Calu3 (cell line): ENCODE measurements at regions of chr22 and their contacts with region 1.

Region 1: GRCh38 chr22:26236991-26237390 is 67.7 kb downstream of the SEZ6L start:
- DNase-seq: no peak
- H3K4me3 Mint-ChIP-seq: no peak overlapping the region
- H3K27ac Mint-ChIP-seq: no peak overlapping the region
- H3K4me1 Mint-ChIP-seq: no peaks in the 10 kb centered on the region
- H3K27me3 Mint-ChIP-seq: peaks cover 91% of the 10 kb centered on the region
- CTCF ChIP-seq: no peak

Region 2: DNA sequence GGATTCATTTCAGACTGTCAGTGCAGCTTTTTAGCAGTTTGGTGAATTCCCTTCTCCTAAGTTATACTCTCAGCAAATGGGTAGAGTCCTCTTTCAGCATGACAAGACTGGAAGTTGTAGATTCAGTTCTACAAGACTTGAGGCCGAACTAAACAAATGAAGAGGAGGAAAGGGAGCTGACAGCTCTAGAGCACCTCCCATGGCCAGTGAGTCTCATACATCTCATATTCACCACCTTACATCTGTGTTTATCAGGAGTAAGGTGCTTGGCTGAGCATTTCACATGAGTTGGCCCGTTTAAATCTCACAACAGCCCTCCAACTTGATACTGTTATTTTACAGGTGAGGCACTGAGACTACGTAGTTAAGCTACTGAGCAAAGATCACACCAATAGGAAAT is 37.3 kb before region 1 on chr22:
- CTCF ChIA-PET with region 1: no interaction called
- intact Hi-C with region 1: no loop called
- DNase-seq: no peak
- H3K4me3 Mint-ChIP-seq: no peak overlapping the region
- H3K27ac Mint-ChIP-seq: no peak overlapping the region
- H3K4me1 Mint-ChIP-seq: no peaks in the 10 kb centered on the region
- H3K27me3 Mint-ChIP-seq: peaks cover 78% of the 10 kb centered on the region
- CTCF ChIP-seq: no peak

Region 3: GRCh38 chr22:26276529-26277160 is 39.7 kb after region 1 on chr22:
- CTCF ChIA-PET with region 1: interaction called, 10 read pairs
- intact Hi-C with region 1: no loop called
- DNase-seq: no peak
- H3K4me3 Mint-ChIP-seq: no peak overlapping the region
- H3K27ac Mint-ChIP-seq: no peak overlapping the region
- H3K4me1 Mint-ChIP-seq: no peaks in the 10 kb centered on the region
- H3K27me3 Mint-ChIP-seq: peaks cover 92% of the 10 kb centered on the region
- CTCF ChIP-seq: no peak

Region 4: DNA sequence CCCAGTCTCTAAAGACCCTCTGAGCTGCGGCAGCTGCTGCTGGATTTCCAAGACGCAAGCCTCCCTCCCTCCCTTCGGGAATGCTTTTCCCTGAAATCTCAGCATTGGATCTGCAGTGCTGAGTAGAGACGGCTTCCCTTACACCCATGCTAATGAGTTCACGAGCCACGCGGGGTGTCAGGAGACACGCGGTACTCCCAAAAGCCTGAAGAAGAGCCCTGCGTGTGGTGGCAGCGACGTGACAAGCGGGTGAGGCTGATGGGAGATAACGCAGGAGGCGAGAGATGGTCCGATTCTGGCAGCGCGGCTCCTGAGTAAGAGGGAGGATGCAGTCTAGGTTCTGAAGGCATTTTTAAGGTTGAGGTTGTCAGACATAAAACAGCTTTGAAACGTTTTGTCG is 117.7 kb after region 1 on chr22:
- CTCF ChIA-PET with region 1: no interaction called
- intact Hi-C with region 1: no loop called
- DNase-seq: no peak
- H3K4me3 Mint-ChIP-seq: no peak overlapping the region
- H3K27ac Mint-ChIP-seq: no peak overlapping the region
- H3K4me1 Mint-ChIP-seq: no peaks in the 10 kb centered on the region
- H3K27me3 Mint-ChIP-seq: peaks cover 39% of the 10 kb centered on the region
- CTCF ChIP-seq: no peak